ENCODE measurements at regions of chr16 and their contacts with region 1.

Region 1: GRCh38 chr16:71920658-71921057 is 25.3 kb downstream of the IST1 start:
- DNase-seq: no peak
- ATAC-seq: no peak
- H3K4me3 ChIP-seq: no peak overlapping the region
- H3K27ac ChIP-seq: no peak overlapping the region
- H3K4me1 ChIP-seq: peaks cover 8% of the 10 kb centered on the region; the same call in 1 of the 2 replicates
- H3K27me3 ChIP-seq: no peaks in the 10 kb centered on the region
- CTCF ChIP-seq: no peak

Region 2: GRCh38 chr16:71794943-71795342 is 125.7 kb before region 1 on chr16:
- CTCF ChIA-PET with region 1: no interaction called
- POLR2A ChIA-PET with region 1: no interaction called
- intact Hi-C with region 1: no loop called
- DNase-seq: no peak
- ATAC-seq: no peak
- H3K4me3 ChIP-seq: no peak overlapping the region
- H3K27ac ChIP-seq: no peak overlapping the region
- H3K4me1 ChIP-seq: no peaks in the 10 kb centered on the region
- H3K27me3 ChIP-seq: no peaks in the 10 kb centered on the region
- CTCF ChIP-seq: no peak

Region 3: DNA sequence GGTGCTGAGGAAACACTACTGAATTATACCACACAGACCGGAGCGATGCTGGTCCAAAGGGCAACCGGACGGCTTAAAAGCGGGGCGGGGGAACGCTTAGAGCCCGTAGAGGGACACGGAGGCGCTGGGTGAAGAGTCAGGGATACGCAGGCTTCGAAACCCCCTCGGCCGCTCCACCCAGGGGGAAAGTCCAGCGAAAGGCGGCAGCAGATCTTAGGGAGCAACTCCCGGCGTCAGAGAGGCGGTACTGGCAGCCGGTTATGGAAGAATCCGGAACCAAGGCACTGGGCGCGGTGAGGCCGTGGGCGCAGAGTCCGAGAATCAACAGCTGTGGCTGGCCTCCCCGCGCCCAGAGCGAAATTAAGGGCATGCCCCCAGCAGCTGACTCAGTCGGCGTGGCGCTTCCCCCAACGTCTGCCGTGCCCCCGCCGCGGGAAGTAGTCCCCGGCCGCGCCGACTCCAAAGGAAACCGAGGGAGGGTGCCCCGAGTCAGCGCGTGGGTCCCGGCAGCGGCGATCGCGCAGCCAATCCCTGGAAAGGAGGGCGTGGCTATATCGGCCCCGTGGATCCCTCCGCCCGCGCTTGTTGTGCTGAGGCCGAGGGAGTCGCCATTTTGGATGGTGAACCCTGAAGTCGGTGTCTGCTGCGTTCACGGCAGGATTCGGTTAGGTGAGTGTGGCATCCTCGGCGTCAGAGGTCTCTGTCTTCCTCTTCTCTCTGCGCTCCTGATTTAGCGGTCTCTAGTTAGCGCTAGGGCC is 25.6 kb before region 1 on chr16 and contains the start of gene IST1:
- CTCF ChIA-PET with region 1: interaction called, 13 read pairs
- POLR2A ChIA-PET with region 1: no interaction called
- intact Hi-C with region 1: no loop called
- DNase-seq: peak; percentile 92
- ATAC-seq: peak; percentile 87
- H3K4me3 ChIP-seq: peak within 1 kb of the TSS; percentile 100
- H3K27ac ChIP-seq: peak within 1 kb of the TSS; percentile 82
- H3K4me1 ChIP-seq: peaks cover 13% of the 10 kb centered on the region; the same call in 1 of the 2 replicates
- H3K27me3 ChIP-seq: no peaks in the 10 kb centered on the region
- CTCF ChIP-seq: no peak
- total RNA-seq, gene IST1: 75.2 and 86.4 TPM in 2 replicates